ENCODE measurements at regions of chr5 and their contacts with region 1.

Region 1: GRCh38 chr5:54415896-54416601 is 39.5 kb upstream of the HSPB3 start:
- DNase-seq: no peak
- H3K4me3 ChIP-seq: no peak overlapping the region
- H3K27ac ChIP-seq: no peak overlapping the region
- H3K4me1 ChIP-seq: no peaks in the 10 kb centered on the region
- H3K27me3 ChIP-seq: no peaks in the 10 kb centered on the region
- CTCF ChIP-seq: no peak
- POLR2A ChIP-seq: no peak

Region 2: DNA sequence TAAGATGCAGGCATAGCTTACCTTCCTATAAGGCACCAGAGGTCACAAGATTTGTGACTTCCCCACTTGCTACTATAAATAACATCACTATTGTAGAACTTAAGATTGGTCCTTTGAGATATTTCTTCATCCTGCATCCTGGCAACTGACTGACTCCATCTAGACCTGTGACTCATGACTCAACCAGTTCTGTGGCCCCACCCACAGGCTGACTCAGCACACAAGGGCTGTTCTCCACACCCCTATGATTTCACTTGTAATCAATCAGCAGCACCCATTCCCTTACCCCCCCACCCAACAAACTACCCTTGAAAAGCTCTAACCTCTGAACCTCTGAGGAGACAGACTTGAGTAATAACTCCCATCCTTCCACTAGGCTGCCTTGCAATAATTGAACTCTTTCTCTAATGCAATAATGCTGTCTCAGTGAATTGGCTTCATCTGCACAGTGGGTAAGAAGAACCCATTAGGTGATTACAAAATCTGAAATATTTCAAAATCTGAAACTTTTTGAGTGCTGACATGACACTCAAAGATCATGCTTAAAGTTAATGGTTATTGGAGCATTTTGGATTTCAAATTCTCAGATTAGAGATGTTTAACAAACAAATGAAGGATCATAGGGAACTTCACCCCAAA is 402.4 kb before region 1 on chr5:
- intact Hi-C with region 1: no loop called
- DNase-seq: no peak
- H3K4me3 ChIP-seq: no peak overlapping the region
- H3K27ac ChIP-seq: no peak overlapping the region
- H3K4me1 ChIP-seq: peaks cover 10% of the 10 kb centered on the region
- H3K27me3 ChIP-seq: no peaks in the 10 kb centered on the region
- CTCF ChIP-seq: no peak
- POLR2A ChIP-seq: no peak

Region 3: GRCh38 chr5:54254482-54255198 is 161.4 kb before region 1 on chr5:
- intact Hi-C with region 1: loop called (anchors 5 kb)
- DNase-seq: no peak
- H3K4me3 ChIP-seq: no peak overlapping the region
- H3K27ac ChIP-seq: no peak overlapping the region
- H3K4me1 ChIP-seq: peaks cover 5% of the 10 kb centered on the region
- H3K27me3 ChIP-seq: no peaks in the 10 kb centered on the region
- CTCF ChIP-seq: no peak
- POLR2A ChIP-seq: no peak